ENCODE measurements at regions of chr14 and their contacts with region 1.

Region 1: DNA sequence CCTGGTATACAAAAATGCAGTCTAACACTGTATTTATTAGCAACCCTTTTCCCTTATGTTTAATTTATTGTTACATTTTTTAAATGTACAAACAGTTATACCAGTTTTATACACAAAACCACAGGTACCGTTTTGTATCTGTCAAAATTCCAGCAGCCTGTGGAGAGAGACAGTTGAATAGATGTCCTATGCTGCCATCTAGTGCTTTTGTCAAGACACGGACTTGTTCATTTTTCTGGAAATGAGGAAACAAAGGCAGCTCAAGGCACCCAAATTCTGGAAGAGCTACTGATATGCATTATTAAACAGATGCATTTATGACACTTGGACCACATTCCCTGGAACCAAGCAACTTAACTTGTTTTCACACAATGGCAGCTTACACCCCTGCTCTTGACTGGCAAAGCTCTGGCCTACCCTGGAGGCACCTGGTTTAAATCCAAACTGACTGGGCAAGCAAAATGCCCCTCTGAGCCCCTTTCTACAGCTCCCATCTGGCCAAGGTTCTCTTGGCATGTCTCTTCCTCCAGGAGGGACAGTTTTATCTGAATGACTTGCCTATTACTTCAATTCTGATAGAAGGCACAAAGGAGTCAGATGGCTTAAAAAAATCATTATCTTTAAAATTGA is 286.9 kb upstream of the PRKD1 start:
- DNase-seq: no peak
- ATAC-seq: peak; percentile 69

Region 2: DNA sequence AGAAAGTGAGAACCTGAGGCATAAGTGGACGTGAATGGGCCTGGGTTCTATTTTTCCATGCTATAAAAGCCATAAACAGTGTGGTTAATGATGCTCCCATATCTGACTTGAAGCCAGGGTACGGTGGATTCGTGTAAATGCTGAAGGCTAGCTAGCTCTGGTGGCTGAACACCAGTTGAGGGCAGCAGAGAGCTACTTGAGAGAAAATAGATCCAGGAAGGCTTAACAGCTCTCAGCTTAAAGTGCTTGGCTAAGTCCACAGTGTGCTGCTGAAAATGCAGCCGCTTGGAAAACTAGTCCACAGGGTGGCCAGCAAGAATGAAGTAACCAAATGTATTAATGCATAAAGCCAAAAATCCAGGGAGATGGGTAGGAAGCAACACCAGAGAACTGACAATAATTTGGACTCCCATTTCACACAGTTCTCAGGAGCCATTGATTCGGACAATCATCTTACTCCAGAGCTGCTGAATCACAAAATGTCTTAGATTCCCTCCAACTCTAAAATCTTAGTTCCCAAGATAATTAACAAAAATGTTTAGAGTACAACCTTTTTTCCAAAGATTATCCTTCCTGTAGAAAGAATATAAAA is 1463.0 kb before region 1 on chr14:
- intact Hi-C with region 1: loop called (anchors 10 kb)
- DNase-seq: no peak
- ATAC-seq: no peak

Region 3: GRCh38 chr14:29548948-29549370 is 665.6 kb before region 1 on chr14:
- intact Hi-C with region 1: loop called (anchors 10 kb)
- DNase-seq: no peak
- ATAC-seq: peak; percentile 77

Region 4: GRCh38 chr14:30005114-30005808 is 209.3 kb before region 1 on chr14:
- intact Hi-C with region 1: loop called (anchors 10 kb)
- DNase-seq: no peak
- ATAC-seq: peak; percentile 79